Activated CD4-positive, alpha-beta T cell treated with anti-CD3 and anti-CD28 coated beads for 36 hours (primary cell): ENCODE measurements at regions of chr11 and their contacts with region 1.

Region 1: DNA sequence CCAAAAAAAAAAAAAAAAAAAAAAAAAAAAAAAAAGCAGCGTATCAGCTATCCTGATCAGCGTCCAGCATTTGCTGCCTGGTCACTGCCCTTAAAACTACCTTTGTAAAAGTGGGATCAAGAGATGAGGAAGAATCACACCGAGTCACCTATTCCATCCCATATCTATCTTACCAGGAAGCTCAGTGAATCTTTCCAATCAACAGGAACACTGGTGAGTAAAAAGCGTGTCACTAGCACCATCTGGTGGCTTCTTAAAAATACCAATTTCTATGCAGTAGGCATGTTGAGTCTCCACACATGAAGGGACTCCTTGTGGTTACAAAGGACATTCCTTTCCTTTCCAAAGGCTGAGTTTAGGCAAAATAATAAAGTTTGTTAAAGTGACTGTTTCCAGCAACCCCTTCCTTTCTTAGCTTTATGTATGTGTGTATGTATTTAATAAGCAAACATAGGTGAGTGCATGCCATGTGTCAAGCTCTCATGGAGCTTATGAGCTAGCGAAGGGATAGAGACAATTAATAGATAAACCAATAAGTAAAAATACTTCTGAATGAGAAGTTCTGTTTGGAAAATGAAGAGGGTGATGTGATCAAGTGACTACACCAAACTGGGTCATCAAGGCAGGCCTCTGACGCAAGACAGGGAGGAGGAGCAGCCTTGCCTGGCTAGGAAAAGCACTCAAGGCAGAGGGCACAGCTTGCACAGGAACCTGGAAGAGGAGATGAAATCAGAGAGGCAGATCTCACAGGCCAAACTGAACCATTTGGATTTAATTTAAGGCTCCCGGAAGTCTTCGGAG is 13.9 kb upstream of the TP53AIP1 start:
- DNase-seq: peak; percentile 20
- ATAC-seq: peak; percentile 57
- H3K4me3 Mint-ChIP-seq: no peak overlapping the region
- H3K27ac Mint-ChIP-seq: no peak overlapping the region
- H3K4me1 Mint-ChIP-seq: peaks cover 2% of the 10 kb centered on the region
- H3K27me3 Mint-ChIP-seq: peaks cover 2% of the 10 kb centered on the region

Region 2: DNA sequence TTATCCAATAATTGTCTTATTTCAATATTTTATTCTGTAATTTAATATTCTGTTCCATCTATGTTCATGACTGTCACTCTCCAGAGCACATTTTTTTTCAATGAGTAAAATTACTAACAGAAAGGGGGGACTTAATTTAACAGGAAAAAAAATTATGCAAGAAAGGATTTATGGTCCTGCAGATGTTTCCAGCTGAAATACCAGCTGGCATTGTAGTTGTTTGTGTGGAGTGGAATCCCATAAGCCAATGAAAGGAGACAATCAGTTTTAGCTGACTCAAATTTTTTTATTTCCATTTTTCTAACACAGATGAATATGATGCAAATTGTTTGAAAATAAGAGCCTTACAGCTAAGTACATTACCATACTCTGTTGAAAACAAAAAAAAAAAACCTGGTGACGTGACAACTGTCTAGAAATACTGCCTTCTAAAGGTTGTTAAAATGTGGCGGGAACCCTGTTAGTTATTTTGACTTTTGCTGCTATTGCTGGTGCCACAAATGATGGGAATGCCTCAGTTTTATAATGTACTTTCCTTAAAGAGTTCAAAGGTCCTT is 758.3 kb before region 1 on chr11:
- CTCF ChIA-PET with region 1: no interaction called
- POLR2A ChIA-PET with region 1: no interaction called
- intact Hi-C with region 1: no loop called
- DNase-seq: no peak
- ATAC-seq: no peak
- H3K4me3 Mint-ChIP-seq: no peak overlapping the region
- H3K27ac Mint-ChIP-seq: no peak overlapping the region
- H3K4me1 Mint-ChIP-seq: peaks cover 51% of the 10 kb centered on the region
- H3K27me3 Mint-ChIP-seq: no peaks in the 10 kb centered on the region

Region 3: DNA sequence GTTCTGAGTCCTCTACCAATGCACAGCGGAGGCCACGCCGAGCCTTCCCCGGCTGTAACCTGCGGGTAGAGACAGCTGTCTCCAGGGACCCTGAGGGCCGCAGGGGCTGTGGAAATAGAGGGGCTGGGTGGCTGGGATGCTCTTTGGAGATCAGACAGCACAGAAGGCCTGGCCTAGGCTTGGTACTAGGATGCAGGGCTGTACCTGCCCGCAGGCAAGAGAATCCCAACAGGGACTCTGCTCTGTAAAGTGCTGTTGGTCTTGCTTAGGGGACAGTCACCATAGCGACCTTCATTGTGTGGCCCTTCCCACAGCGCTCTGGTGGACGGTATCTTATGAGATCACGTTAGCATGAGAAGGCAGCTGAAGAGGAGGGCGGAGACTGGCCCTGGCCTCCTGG is 76.8 kb before region 1 on chr11:
- CTCF ChIA-PET with region 1: interaction called, 162 read pairs
- POLR2A ChIA-PET with region 1: no interaction called
- intact Hi-C with region 1: loop called (anchors 1 kb)
- DNase-seq: no peak
- ATAC-seq: no peak
- H3K4me3 Mint-ChIP-seq: no peak overlapping the region
- H3K27ac Mint-ChIP-seq: no peak overlapping the region
- H3K4me1 Mint-ChIP-seq: no peaks in the 10 kb centered on the region
- H3K27me3 Mint-ChIP-seq: peaks cover 23% of the 10 kb centered on the region

Region 4: DNA sequence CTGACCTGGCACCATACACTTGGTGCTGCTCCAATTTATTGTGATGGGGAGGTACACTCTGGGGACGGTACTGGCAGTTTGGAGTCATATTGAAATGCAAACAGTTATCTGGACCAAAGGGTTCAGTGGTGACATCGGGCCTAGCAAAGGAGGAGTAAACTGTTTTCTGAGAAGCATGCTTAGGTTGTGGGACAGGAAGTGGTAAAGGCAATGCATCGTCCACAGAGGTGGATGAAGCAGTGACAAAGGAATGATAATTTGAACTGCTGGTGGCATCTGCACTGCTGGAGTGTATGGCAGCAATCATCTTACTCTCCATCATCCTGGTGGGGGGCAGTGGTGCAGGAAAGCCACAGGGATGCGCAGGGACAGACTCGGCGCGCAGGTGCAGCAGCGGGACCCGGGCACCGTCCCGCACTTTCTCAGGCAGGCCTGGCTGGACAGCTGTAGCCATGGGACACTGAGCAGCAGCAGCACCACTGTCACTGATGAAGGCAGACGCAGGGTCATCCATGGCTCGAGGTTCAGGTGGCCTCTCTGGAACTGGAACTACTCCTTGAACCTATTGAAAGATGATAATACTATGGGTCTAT is 14.1 kb after region 1 on chr11:
- CTCF ChIA-PET with region 1: interaction called, 10 read pairs
- POLR2A ChIA-PET with region 1: no interaction called
- intact Hi-C with region 1: no loop called
- DNase-seq: no peak
- ATAC-seq: no peak
- H3K4me3 Mint-ChIP-seq: no peak overlapping the region
- H3K27ac Mint-ChIP-seq: no peak overlapping the region
- H3K4me1 Mint-ChIP-seq: peaks cover 1% of the 10 kb centered on the region
- H3K27me3 Mint-ChIP-seq: no peaks in the 10 kb centered on the region

Region 5: GRCh38 chr11:129259931-129260348 is 303.3 kb after region 1 on chr11:
- CTCF ChIA-PET with region 1: no interaction called
- POLR2A ChIA-PET with region 1: no interaction called
- intact Hi-C with region 1: no loop called
- DNase-seq: no peak
- ATAC-seq: no peak
- H3K4me3 Mint-ChIP-seq: no peak overlapping the region
- H3K27ac Mint-ChIP-seq: no peak overlapping the region
- H3K4me1 Mint-ChIP-seq: peaks cover 10% of the 10 kb centered on the region
- H3K27me3 Mint-ChIP-seq: no peaks in the 10 kb centered on the region